ENCODE measurements at regions of chr4 and their contacts with region 1.

Region 1: DNA sequence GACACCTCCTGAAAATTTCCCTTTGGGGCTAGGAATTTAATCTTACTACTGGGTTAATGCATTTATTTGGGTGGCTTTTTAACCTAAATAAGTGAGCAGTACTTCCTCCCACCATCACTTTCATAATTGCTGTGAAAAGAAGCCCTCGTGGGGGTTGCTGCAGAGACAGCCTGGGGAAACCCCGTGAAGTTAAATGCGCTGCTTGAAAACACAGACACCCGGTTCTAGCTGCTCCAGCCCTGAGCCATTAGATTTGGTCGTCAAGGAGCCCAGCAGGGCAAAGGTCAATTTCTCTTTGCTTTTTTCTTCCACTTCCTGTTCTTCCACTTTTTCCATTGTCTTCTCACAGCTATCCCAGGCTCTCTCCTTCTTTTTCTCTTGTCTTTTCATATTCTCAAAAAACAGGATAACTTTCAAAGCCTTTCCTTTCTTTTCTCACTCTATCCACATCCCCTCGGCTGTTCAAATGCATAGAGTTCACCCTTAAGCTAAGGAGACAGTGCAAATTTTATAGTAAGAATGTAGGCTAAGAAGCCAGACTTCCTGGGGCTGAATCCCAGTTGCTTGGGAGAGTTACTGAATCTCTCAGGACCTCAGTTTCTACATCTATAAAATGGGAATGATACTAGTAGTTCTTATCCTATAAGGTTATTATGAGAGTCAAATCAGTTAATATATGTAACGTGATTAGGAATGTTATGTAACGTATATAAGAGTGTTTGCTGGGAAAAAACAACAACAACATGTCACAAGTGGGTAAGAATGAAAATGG is 91.5 kb upstream of the ZNF827 start:
- DNase-seq: no peak
- ATAC-seq: no peak

Region 2: DNA sequence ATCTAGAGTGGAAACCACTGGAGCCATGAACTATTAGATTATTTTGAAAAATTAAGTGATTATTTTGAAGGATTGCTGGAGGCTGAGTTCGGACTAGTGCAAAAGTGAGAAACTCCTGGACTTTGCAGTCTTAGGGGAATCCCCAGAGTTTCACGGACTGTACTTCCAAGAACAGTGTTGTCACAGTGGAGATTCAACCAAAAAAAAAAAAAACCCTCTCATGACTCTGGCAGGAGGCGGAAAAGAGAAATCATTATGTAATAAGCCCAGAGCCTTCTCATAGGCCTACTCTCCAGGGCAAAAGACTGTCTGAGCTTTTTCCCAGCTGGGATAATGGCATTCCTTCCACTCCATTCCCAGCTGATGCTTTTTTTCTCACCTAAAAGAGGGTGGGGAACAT is 366.9 kb before region 1 on chr4:
- intact Hi-C with region 1: no loop called
- DNase-seq: no peak
- ATAC-seq: peak; percentile 78

Region 3: GRCh38 chr4:147201016-147201415 is 1170.9 kb after region 1 on chr4:
- intact Hi-C with region 1: loop called (anchors 5 kb)
- DNase-seq: no peak
- ATAC-seq: no peak

Measured in sciatic nerve (tissue), 2 donors.